HepG2 (cell line): ENCODE measurements at regions of chr2 and their contacts with region 1.

Region 1: GRCh38 chr2:178450774-178451525 is at the starts of genes PJVK and PRKRA:
- DNase-seq: peak; percentile 93
- ATAC-seq: peak; percentile 97
- H3K4me3 ChIP-seq: peak within 1 kb of the TSS; percentile 75 to 88 (median 82)
- H3K27ac ChIP-seq: peak within 1 kb of the TSS; percentile 96
- H3K4me1 ChIP-seq: peaks cover 33% of the 10 kb centered on the region
- H3K27me3 ChIP-seq: no peaks in the 10 kb centered on the region; a peak in 1 of 5 replicates
- CTCF ChIP-seq: peak; percentile 43
- EP300 ChIP-seq: peak in 1 of 2 experiments; percentile 14; a peak in 1 of 4 replicates
- POLR2A ChIP-seq: peak; percentile 93 to 97
- RAD21 ChIP-seq: peak; percentile 80
- total RNA-seq, gene PJVK: 1.1 and 1.2 TPM in 2 replicates
- total RNA-seq, gene PRKRA: 67.6 and 74.7 TPM in 2 replicates

Region 2: GRCh38 chr2:177397481-177398289 is 1053.3 kb before region 1 on chr2:
- CTCF ChIA-PET with region 1: no interaction called
- POLR2A ChIA-PET with region 1: no interaction called
- in situ Hi-C with region 1: no loop called
- intact Hi-C with region 1: loop called (anchors 5 kb)
- DNase-seq: peak; percentile 97
- ATAC-seq: peak; percentile 68
- H3K4me3 ChIP-seq: peak overlapping the region; percentile 28 to 43 (median 39); a peak in 4 of 6 replicates
- H3K27ac ChIP-seq: peak overlapping the region; percentile 86
- H3K4me1 ChIP-seq: peaks cover 88% of the 10 kb centered on the region
- H3K27me3 ChIP-seq: no peaks in the 10 kb centered on the region; a peak in 1 of 5 replicates
- CTCF ChIP-seq: 0 out of 2 replicates have a peak, but pooled peaks have one; percentile 10
- EP300 ChIP-seq: peak in 1 of 2 experiments; percentile 98; a peak in 2 of 4 replicates
- POLR2A ChIP-seq: no peak
- RAD21 ChIP-seq: peak; percentile 28; the same call in 1 of the 2 replicates

Region 3: GRCh38 chr2:178426388-178426787 is 24.6 kb before region 1 on chr2:
- CTCF ChIA-PET with region 1: no interaction called
- POLR2A ChIA-PET with region 1: interaction called, 76 read pairs
- in situ Hi-C with region 1: no loop called
- intact Hi-C with region 1: no loop called
- DNase-seq: no peak
- ATAC-seq: no peak
- H3K4me3 ChIP-seq: no peak overlapping the region
- H3K27ac ChIP-seq: no peak overlapping the region
- H3K4me1 ChIP-seq: peaks cover 25% of the 10 kb centered on the region
- H3K27me3 ChIP-seq: no peaks in the 10 kb centered on the region
- CTCF ChIP-seq: no peak
- EP300 ChIP-seq: no peak
- POLR2A ChIP-seq: no peak
- RAD21 ChIP-seq: no peak

Region 4: GRCh38 chr2:178469219-178469849 is 18.4 kb after region 1 on chr2:
- CTCF ChIA-PET with region 1: no interaction called
- POLR2A ChIA-PET with region 1: interaction called, 97 read pairs
- in situ Hi-C with region 1: no loop called
- intact Hi-C with region 1: loop called (anchors 1 kb)
- DNase-seq: peak; percentile 79
- ATAC-seq: peak; percentile 95
- H3K4me3 ChIP-seq: peak overlapping the region in 2 of 3 experiments; percentile 6 to 16; a peak in 3 of 6 replicates
- H3K27ac ChIP-seq: peak overlapping the region; percentile 84
- H3K4me1 ChIP-seq: peaks cover 23% of the 10 kb centered on the region
- H3K27me3 ChIP-seq: no peaks in the 10 kb centered on the region
- CTCF ChIP-seq: no peak
- EP300 ChIP-seq: peak; percentile 90 to 92
- POLR2A ChIP-seq: no peak
- RAD21 ChIP-seq: no peak

Region 5: GRCh38 chr2:178478439-178479274 is 27.7 kb after region 1 on chr2 and contains the start of gene FKBP7:
- CTCF ChIA-PET with region 1: interaction called, 4 read pairs
- POLR2A ChIA-PET with region 1: interaction called, 74 read pairs
- in situ Hi-C with region 1: no loop called
- intact Hi-C with region 1: loop called (anchors 1 kb)
- DNase-seq: peak; percentile 82
- ATAC-seq: peak; percentile 67
- H3K4me3 ChIP-seq: peak within 1 kb of the TSS; percentile 80 to 91 (median 82)
- H3K27ac ChIP-seq: peak within 1 kb of the TSS; percentile 89
- H3K4me1 ChIP-seq: peaks cover 46% of the 10 kb centered on the region
- H3K27me3 ChIP-seq: no peaks in the 10 kb centered on the region; a peak in 1 of 5 replicates
- CTCF ChIP-seq: peak; percentile 96
- EP300 ChIP-seq: 0 out of 4 replicates have a peak, but pooled peaks of 1 of the 2 experiments have one; percentile 18
- POLR2A ChIP-seq: peak; percentile 79 to 87
- RAD21 ChIP-seq: peak; percentile 43; the same call in 1 of the 2 replicates
- total RNA-seq, gene FKBP7: 9.7 and 14.8 TPM in 2 replicates

Region 6: DNA sequence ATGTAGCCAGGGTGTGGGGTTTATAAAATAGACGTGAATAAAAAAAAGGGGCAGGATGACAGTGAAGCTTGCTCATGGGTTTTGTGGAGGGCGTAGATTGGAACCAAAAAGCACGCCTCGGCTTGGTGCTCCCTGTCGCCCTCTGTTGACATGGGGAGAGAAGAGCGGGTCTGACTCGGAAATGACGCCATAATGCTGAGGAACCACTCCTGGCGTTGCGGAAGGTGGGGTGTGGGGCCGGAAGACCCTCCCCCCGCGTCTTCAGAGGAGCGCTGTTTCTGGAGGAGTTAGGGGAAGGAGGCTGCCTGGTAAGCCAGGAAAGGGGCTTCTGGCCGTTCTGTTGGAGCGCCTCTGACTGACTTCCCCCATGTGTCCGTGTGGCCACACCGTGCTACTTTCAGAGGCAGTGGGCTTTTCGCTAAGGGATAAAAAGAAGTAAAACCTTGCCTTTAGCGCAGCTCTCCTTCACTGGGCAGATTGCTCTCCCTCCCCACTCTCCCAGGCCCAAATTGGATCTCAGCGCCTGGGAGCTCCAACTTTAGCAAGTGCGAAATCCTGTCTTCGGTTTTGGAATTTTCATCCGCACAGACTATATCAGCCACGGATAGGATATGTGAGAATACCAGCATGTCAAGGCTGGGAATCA is 72.1 kb after region 1 on chr2:
- CTCF ChIA-PET with region 1: no interaction called
- POLR2A ChIA-PET with region 1: interaction called, 4 read pairs
- in situ Hi-C with region 1: no loop called
- intact Hi-C with region 1: loop called (anchors 1 kb)
- DNase-seq: peak; percentile 61
- ATAC-seq: peak; percentile 89
- H3K4me3 ChIP-seq: peak overlapping the region; percentile 52 to 72 (median 53)
- H3K27ac ChIP-seq: peak overlapping the region; percentile 5
- H3K4me1 ChIP-seq: no peaks in the 10 kb centered on the region
- H3K27me3 ChIP-seq: no peaks in the 10 kb centered on the region
- CTCF ChIP-seq: peak; percentile 87
- EP300 ChIP-seq: no peak
- POLR2A ChIP-seq: peak; percentile 27 to 79; a peak in 3 of 4 replicates
- RAD21 ChIP-seq: peak; percentile 44; the same call in 1 of the 2 replicates

Region 7: GRCh38 chr2:178602901-178603300 is 152.0 kb after region 1 on chr2:
- CTCF ChIA-PET with region 1: no interaction called
- POLR2A ChIA-PET with region 1: no interaction called
- in situ Hi-C with region 1: no loop called
- intact Hi-C with region 1: no loop called
- DNase-seq: no peak
- ATAC-seq: no peak
- H3K4me3 ChIP-seq: no peak overlapping the region
- H3K27ac ChIP-seq: no peak overlapping the region
- H3K4me1 ChIP-seq: no peaks in the 10 kb centered on the region
- H3K27me3 ChIP-seq: no peaks in the 10 kb centered on the region
- CTCF ChIP-seq: no peak
- EP300 ChIP-seq: no peak
- POLR2A ChIP-seq: no peak
- RAD21 ChIP-seq: no peak

Region 8: GRCh38 chr2:178914259-178914849 is 463.4 kb after region 1 on chr2:
- CTCF ChIA-PET with region 1: no interaction called
- POLR2A ChIA-PET with region 1: no interaction called
- in situ Hi-C with region 1: no loop called
- intact Hi-C with region 1: loop called (anchors 10 kb)
- DNase-seq: peak; percentile 76
- ATAC-seq: peak; percentile 99
- H3K4me3 ChIP-seq: no peak overlapping the region
- H3K27ac ChIP-seq: no peak overlapping the region
- H3K4me1 ChIP-seq: no peaks in the 10 kb centered on the region
- H3K27me3 ChIP-seq: peaks cover 0 to 4% of the 10 kb centered on the region in 2 experiments; a peak in 1 of 5 replicates
- CTCF ChIP-seq: peak; percentile 93
- EP300 ChIP-seq: no peak
- POLR2A ChIP-seq: no peak
- RAD21 ChIP-seq: peak; percentile 61